WTC11 (cell line): ENCODE measurements at regions of chr17 and their contacts with region 1.

Region 1: GRCh38 chr17:44899069-44899782 is at the start of gene EFTUD2:
- DNase-seq: peak; percentile 89
- ATAC-seq: peak; percentile 85
- H3K4me3 Mint-ChIP-seq: peak within 1 kb of the TSS; percentile 88
- H3K27ac Mint-ChIP-seq: peak within 1 kb of the TSS; percentile 100
- H3K4me1 Mint-ChIP-seq: peaks cover 12% of the 10 kb centered on the region
- H3K27me3 Mint-ChIP-seq: no peaks in the 10 kb centered on the region; the same call in 1 of the 2 replicates
- CTCF ChIP-seq: no peak
- total RNA-seq, gene EFTUD2: 128 to 162 TPM (median 148 TPM) in 3 replicates

Region 2: GRCh38 chr17:44878627-44879221 is 20.5 kb before region 1 on chr17:
- CTCF ChIA-PET with region 1: interaction called, 10 read pairs
- POLR2A ChIA-PET with region 1: no interaction called
- DNase-seq: no peak
- ATAC-seq: no peak
- H3K4me3 Mint-ChIP-seq: no peak overlapping the region
- H3K27ac Mint-ChIP-seq: no peak overlapping the region
- H3K4me1 Mint-ChIP-seq: no peaks in the 10 kb centered on the region
- H3K27me3 Mint-ChIP-seq: no peaks in the 10 kb centered on the region
- CTCF ChIP-seq: no peak